Motor neuron (in vitro differentiated cells): ENCODE measurements at regions of chr3 and their contacts with region 1.

Region 1: DNA sequence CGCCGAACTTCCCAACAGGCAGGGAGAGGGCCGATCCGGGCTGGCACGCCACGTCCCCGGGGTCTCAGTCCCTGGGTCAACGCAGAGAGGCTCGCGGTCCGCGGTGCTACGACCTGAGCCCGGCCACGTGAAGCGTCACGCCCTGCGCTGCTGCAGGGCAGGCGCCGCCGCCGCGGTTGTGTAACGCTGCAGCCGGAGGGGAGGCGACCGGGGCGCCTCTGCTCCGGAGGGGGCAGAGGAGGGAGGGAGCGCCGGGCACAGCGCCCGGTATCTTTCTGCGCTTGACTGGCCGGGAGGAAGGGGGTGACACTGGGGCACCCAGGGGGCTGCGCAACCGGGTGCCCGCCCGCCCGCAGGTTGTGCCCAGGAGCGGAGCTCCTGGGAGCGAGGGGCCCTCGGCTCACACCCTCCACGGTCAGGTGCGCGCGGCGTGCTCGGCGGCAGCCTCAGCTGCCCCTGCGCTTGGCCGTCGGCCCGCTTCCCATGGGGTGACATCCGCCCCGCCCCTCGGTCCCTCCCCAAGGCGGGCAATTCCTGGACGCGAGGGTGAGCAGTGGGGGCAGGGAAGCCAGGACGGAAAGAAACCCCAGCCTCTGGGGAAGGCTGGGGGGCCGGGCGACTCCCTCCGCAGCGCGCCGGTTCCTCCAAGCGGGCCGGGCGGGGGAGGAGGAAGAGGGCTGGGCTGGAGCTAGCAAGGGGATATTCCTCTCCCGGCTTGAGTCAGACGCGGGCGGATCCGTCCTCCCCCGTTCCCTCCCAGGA is 852 bp upstream of the BHLHE40 start:
- ATAC-seq: peak; percentile 49 to 83 (median 76)
- H3K4me3 ChIP-seq: peak overlapping the region; percentile 48 to 89 (median 74)
- H3K27ac ChIP-seq: peak overlapping the region; percentile 91 to 93
- H3K4me1 ChIP-seq: peaks cover 13 to 17% of the 10 kb centered on the region in 2 donors

Region 2: GRCh38 chr3:4712143-4712542 is 266.2 kb before region 1 on chr3:
- in situ Hi-C with region 1: loop called in 2 of 9 experiments (anchors 10 to 25 kb)
- ATAC-seq: peak in 2 of 8 experiments; percentile 7 to 47
- H3K4me3 ChIP-seq: no peak overlapping the region
- H3K27ac ChIP-seq: no peak overlapping the region
- H3K4me1 ChIP-seq: peaks cover 0 to 2% of the 10 kb centered on the region in 2 donors

Region 3: DNA sequence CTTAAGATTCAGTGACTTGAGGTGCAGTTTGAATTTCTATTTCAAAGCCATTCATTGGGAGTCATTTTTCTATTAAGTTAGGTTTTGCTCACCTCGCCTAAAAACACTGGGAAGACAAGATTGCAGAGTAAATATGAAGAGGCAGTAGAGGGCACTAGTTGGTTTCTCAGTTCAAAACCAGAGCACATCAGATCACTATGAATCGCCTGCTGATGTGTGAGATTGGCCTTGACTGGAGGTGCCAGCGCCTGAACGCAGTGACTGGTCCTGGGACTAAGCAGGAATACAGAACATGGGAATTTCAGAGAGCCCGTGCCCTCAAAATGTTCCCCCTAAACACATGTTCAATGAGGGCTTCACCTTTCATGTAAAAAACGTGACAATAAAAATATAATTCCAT is 256.3 kb before region 1 on chr3:
- in situ Hi-C with region 1: loop called in 3 of 9 experiments (anchors 10 to 25 kb)
- ATAC-seq: peak; percentile 32 to 90 (median 76)
- H3K4me3 ChIP-seq: no peak overlapping the region
- H3K27ac ChIP-seq: no peak overlapping the region
- H3K4me1 ChIP-seq: peaks cover 0 to 6% of the 10 kb centered on the region in 2 donors

Region 4: GRCh38 chr3:4741404-4742307 is 236.7 kb before region 1 on chr3:
- in situ Hi-C with region 1: loop called in 1 of 9 experiments (anchors 25 kb)
- ATAC-seq: peak in 3 of 8 experiments; percentile 80 to 96 (median 95)
- H3K4me3 ChIP-seq: no peak overlapping the region
- H3K27ac ChIP-seq: no peak overlapping the region
- H3K4me1 ChIP-seq: no peaks in the 10 kb centered on the region